ENCODE measurements at regions of chr3 and their contacts with region 1.

Region 1: DNA sequence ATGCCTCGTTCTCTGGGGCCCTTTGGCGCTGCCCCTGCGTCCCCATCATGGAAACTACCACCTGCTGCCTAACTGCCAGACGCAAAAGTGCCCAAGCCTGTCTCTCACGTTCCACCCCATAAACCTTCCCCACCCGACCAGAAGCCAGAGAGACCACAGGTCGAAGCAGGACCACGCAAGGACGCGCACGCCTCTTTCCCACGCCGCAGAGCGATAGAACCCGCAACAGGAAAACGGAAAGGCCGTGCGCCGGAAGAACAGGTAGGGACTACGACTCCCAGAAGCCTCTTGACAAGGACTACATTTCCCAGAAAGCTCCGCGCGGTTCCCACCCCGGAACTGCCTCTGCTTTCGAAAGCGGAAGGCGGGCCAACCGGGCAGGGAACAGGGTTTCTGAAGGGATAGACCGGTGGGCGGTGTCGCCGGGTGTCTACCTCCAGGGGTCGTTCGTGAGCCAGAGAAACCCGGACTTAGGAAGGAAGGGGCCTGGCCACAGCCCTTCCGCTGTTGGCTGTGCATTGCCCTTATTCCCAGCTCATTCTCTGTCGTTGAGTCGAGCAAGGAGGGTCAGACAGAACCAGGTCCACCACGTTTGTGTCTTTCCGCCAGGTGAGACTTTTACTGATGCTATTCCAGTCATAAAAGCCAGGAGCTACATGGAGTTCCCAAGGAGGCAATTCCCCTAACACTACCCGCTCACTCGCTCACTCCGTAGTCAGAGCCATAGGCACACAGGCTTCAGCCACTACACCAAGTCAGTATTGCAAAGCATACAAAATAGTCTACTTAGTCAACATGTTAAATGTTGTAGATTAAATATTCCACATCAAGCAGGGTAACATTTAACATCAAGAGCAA is 56.6 kb upstream of the ZBTB38 start:
- DNase-seq: peak; percentile 100
- ATAC-seq: peak; percentile 95
- H3K4me3 Mint-ChIP-seq: peak overlapping the region; percentile 85
- H3K27ac Mint-ChIP-seq: peak overlapping the region; percentile 99
- H3K4me1 Mint-ChIP-seq: peaks cover 57% of the 10 kb centered on the region
- H3K27me3 Mint-ChIP-seq: no peaks in the 10 kb centered on the region

Region 2: GRCh38 chr3:141412087-141412935 is 100.6 kb after region 1 on chr3:
- CTCF ChIA-PET with region 1: interaction called, 11 read pairs
- POLR2A ChIA-PET with region 1: interaction called, 14 read pairs
- DNase-seq: peak; percentile 79
- ATAC-seq: peak; percentile 62
- H3K4me3 Mint-ChIP-seq: peak overlapping the region; percentile 79
- H3K27ac Mint-ChIP-seq: peak overlapping the region; percentile 97
- H3K4me1 Mint-ChIP-seq: peaks cover 68% of the 10 kb centered on the region
- H3K27me3 Mint-ChIP-seq: no peaks in the 10 kb centered on the region

Region 3: GRCh38 chr3:141431411-141432378 is 120.0 kb after region 1 on chr3:
- CTCF ChIA-PET with region 1: interaction called, 13 read pairs
- POLR2A ChIA-PET with region 1: interaction called, 3 read pairs
- DNase-seq: no peak
- ATAC-seq: no peak
- H3K4me3 Mint-ChIP-seq: no peak overlapping the region
- H3K27ac Mint-ChIP-seq: no peak overlapping the region
- H3K4me1 Mint-ChIP-seq: no peaks in the 10 kb centered on the region
- H3K27me3 Mint-ChIP-seq: no peaks in the 10 kb centered on the region

Measured in activated CD8-positive, alpha-beta T cell treated with anti-CD3 and anti-CD28 coated beads, Interleukin-2, amount 10 ng/mL, durations not matched to agents 7 days and 5 days (primary cell).